ENCODE measurements at regions of chr2 and their contacts with region 1.

Region 1: DNA sequence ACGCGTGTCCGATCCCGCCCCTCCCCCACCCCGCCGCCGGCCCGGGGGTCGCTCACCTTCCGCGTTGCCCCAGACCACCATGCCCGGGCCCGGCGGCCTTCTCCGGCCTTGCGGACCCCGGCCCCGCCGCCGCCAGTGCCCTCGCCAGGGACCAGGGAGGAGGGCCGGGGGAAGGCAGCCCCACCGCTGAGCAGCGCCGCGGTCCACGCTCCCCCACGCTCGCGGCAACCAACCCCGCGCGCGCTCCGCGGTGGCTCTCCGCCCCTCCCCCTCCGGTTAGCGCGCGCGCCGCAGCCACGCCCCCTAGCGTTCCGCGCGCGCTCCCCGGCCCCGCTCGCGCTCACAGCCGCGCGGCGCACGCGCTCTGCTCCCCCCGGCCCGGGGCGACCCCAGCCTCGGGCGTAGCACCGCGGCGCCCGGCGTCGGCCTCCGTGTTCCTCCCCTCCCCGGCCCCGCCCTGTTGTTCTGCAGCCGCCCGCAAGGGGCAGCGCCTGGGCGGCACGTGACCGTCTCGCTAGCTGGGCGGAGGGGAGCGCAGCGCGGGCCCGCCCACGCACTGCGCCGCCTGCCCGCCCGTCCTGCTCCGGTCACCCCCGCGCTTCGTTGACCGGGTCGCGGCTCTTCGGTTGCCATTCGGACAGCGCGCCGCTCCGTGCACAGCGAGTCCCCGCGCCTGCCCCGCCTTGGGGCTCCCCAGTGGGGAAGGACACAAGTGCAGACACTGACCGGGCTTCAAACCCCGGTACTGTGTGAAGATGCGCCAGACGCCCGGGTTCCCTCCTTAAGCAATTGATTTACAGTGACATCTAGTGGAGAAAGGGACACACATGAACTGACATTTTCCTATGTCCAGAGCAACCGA is at the start of gene REV1:
- DNase-seq: peak; percentile 93
- H3K4me3 ChIP-seq: peak within 1 kb of the TSS; percentile 91 to 100 (median 96)
- H3K27ac ChIP-seq: peak within 1 kb of the TSS; percentile 99 to 100 (median 99)
- H3K4me1 ChIP-seq: peaks cover 5 to 31% (median 17%) of the 10 kb centered on the region in 4 donors
- H3K27me3 ChIP-seq: no peaks in the 10 kb centered on the region
- CTCF ChIP-seq: peak; percentile 64 to 98 (median 79)
- EP300 ChIP-seq: no peak
- POLR2A ChIP-seq: peak; percentile 35
- total RNA-seq, gene REV1: 23.2 to 199 (median 73.5) TPM

Region 2: GRCh38 chr2:99180755-99181623 is 309.0 kb before region 1 on chr2 and contains the starts of genes MITD1 and MRPL30:
- in situ Hi-C with region 1: loop called in 3 of 4 experiments (anchors 25 kb)
- intact Hi-C with region 1: no loop called
- DNase-seq: peak; percentile 93
- H3K4me3 ChIP-seq: peak within 1 kb of the TSS; percentile 57 to 86 (median 67)
- H3K27ac ChIP-seq: peak within 1 kb of the TSS; percentile 81 to 87 (median 84)
- H3K4me1 ChIP-seq: peaks cover 18 to 39% (median 23%) of the 10 kb centered on the region in 4 donors
- H3K27me3 ChIP-seq: no peaks in the 10 kb centered on the region
- CTCF ChIP-seq: no peak
- EP300 ChIP-seq: no peak
- POLR2A ChIP-seq: peak; percentile 87
- total RNA-seq, gene MITD1: 5.0 to 30.6 (median 24.0) TPM
- total RNA-seq, gene MRPL30: 12.5 to 23.0 (median 17.6) TPM

Region 3: GRCh38 chr2:99337113-99338028 is 152.6 kb before region 1 on chr2 and contains the start of gene EIF5B:
- in situ Hi-C with region 1: loop called in 3 of 4 experiments (anchors 10 to 25 kb)
- intact Hi-C with region 1: loop called (anchors 2 kb)
- DNase-seq: peak; percentile 97
- H3K4me3 ChIP-seq: peak within 1 kb of the TSS; percentile 91 to 98 (median 93)
- H3K27ac ChIP-seq: peak within 1 kb of the TSS; percentile 93 to 97 (median 94)
- H3K4me1 ChIP-seq: peaks cover 16 to 47% (median 30%) of the 10 kb centered on the region in 4 donors
- H3K27me3 ChIP-seq: no peaks in the 10 kb centered on the region
- CTCF ChIP-seq: peak in 4 of 5 experiments; percentile 42 to 58 (median 54)
- EP300 ChIP-seq: no peak
- POLR2A ChIP-seq: peak; percentile 74
- total RNA-seq, gene EIF5B: 13.1 to 32.6 (median 20.6) TPM

Region 4: DNA sequence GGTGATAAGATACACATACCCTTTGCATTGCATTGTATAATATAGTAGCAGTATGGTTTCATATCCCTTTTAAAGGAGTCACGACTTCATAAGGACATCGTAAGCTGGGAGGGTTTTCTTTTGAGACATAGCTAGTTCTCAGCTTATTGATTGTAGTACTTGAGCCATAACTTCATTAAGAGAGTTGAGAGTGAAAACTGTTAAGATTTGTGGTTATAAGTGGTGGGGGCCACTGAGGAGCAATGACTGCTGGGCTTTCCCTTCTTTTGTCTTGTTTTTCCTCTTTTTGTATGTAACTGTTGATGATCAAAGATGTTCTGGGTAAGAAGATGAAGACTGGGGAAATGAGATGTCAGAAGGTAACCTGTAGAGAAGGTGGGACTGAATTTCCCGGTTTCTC is 141.8 kb before region 1 on chr2:
- in situ Hi-C with region 1: loop called in 3 of 4 experiments (anchors 10 to 25 kb)
- intact Hi-C with region 1: no loop called
- DNase-seq: no peak
- H3K4me3 ChIP-seq: no peak overlapping the region
- H3K27ac ChIP-seq: no peak overlapping the region
- H3K4me1 ChIP-seq: peaks cover 0 to 8% (median 3%) of the 10 kb centered on the region in 4 donors
- H3K27me3 ChIP-seq: no peaks in the 10 kb centered on the region
- CTCF ChIP-seq: no peak
- EP300 ChIP-seq: no peak
- POLR2A ChIP-seq: no peak

Region 5: GRCh38 chr2:99425022-99425421 is 65.0 kb before region 1 on chr2:
- in situ Hi-C with region 1: no loop called
- intact Hi-C with region 1: loop called (anchors 10 kb)
- DNase-seq: no peak
- H3K4me3 ChIP-seq: no peak overlapping the region
- H3K27ac ChIP-seq: no peak overlapping the region
- H3K4me1 ChIP-seq: no peaks in the 10 kb centered on the region
- H3K27me3 ChIP-seq: no peaks in the 10 kb centered on the region
- CTCF ChIP-seq: no peak
- EP300 ChIP-seq: no peak
- POLR2A ChIP-seq: no peak